Activated T-helper 1 cell treated with anti-CD3 and anti-CD28 coated beads, Interleukin-12 subunit alpha, Interleukin-12 subunit beta, Interleukin-2, Interleukin-4 antibody, amounts not matched to agents 30 ng/mL and 10 ng/mL and 1 ng/mL, durations not matched to agents 14 hours and 24 hours and 36 hours (primary cell): ENCODE measurements at regions of chr1 and their contacts with region 1.

Region 1: GRCh38 chr1:231240883-231241735 is at the start of gene GNPAT:
- DNase-seq: peak; percentile 91
- H3K4me3 Mint-ChIP-seq: peak within 1 kb of the TSS; percentile 99
- H3K27ac Mint-ChIP-seq: peak within 1 kb of the TSS; percentile 95
- H3K4me1 Mint-ChIP-seq: peaks cover 51% of the 10 kb centered on the region
- H3K27me3 Mint-ChIP-seq: no peaks in the 10 kb centered on the region
- total RNA-seq, gene GNPAT: 41.7 and 43.1 TPM in 2 replicates

Region 2: DNA sequence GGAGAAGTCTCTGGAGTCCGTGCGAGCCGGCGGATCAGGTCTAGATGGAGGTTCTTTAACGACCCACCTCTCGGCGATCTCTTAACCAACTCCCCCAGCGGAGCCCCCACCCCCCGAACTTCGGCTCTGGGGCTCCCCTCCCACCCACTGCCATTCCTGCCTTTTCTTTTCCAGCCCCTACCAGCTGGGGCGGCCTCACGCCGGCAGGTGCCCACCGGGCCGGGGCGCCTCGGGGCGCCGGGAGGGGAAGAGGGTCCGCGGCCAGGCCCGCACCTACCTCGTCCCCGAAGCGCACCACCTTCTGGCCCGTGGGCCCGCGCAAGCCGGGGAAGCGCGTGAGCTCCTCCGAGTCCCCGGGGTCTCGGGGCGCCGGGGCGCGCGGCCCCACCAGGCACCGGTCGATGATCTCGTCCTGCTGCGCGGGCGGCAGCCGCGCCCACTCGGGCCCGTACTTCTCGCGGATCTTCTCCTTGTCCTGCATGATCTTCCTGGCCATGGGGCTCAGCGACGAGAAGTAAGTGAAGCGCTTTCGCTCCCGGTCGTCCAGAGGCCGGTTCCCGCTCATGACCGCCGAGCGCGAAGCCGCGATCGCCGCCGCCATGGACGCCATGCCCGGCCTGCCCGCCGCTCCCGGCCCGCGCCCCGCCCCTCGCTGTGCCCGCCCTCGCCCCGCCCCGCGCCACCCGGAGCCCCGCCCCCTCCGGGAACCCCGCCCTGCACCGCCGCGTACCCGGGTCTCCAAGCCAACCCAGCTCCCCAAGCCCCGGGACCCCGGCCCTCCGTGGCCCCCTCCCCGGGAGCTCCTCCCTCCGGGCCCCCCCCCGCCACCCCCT is 373.0 kb before region 1 on chr1 and contains the start of gene C1orf198:
- intact Hi-C with region 1: loop called (anchors 1 kb)
- DNase-seq: peak; percentile 59
- H3K4me3 Mint-ChIP-seq: peak within 1 kb of the TSS; percentile 87
- H3K27ac Mint-ChIP-seq: peak within 1 kb of the TSS; percentile 80
- H3K4me1 Mint-ChIP-seq: peaks cover 28% of the 10 kb centered on the region
- H3K27me3 Mint-ChIP-seq: peaks cover 39% of the 10 kb centered on the region
- total RNA-seq, gene C1orf198: 14.1 and 14.6 TPM in 2 replicates

Region 3: GRCh38 chr1:231211005-231211857 is 29.9 kb before region 1 on chr1:
- intact Hi-C with region 1: loop called (anchors 1 kb)
- DNase-seq: peak; percentile 81
- H3K4me3 Mint-ChIP-seq: peak overlapping the region; percentile 82
- H3K27ac Mint-ChIP-seq: peak overlapping the region; percentile 66
- H3K4me1 Mint-ChIP-seq: peaks cover 9% of the 10 kb centered on the region
- H3K27me3 Mint-ChIP-seq: peaks cover 5% of the 10 kb centered on the region

Region 4: DNA sequence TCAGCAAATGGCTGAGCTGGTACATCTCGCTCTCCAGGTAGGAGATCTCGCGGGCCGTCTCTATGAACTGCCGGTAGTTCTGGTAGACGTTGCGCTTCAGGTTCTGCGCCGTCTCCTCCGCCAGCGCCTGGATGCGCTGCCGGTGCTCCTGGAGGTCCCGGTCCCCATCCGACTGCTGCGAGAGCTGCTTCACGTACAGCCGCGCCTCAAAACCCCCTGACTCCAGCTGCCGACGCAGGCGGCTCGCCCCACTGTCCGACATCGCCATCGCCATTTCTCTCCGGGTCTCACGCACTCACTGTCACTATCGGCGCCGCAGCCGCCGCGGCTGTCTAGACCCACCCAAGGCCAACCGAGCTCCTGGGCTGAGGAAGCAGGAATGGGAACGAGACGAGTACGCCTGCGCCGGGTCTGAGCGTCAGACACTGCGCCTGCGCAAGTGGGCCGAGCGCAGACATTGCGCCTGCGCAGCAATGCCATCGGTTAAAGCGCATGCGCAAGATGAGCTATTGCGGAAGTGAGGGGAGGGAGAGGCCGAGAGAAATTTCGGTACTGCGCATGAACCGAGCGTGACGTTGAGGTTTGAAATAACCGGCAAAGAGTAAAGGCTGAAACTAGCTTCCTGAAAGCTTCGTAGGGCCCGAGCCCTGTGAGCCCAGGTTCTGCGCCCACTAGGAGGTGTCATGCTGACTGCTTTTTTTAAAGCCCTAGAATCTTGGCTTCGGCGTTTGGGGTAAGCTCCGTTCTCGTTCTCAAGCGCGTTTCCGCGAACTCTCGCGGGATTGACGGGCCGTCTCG is 96.6 kb after region 1 on chr1 and contains the start of gene EXOC8:
- intact Hi-C with region 1: loop called (anchors 1 kb)
- DNase-seq: peak; percentile 99
- H3K4me3 Mint-ChIP-seq: peak within 1 kb of the TSS; percentile 98
- H3K27ac Mint-ChIP-seq: peak within 1 kb of the TSS; percentile 100
- H3K4me1 Mint-ChIP-seq: peaks cover 62% of the 10 kb centered on the region
- H3K27me3 Mint-ChIP-seq: peaks cover 3% of the 10 kb centered on the region
- total RNA-seq, gene EXOC8: 14.4 and 15.6 TPM in 2 replicates

Region 5: DNA sequence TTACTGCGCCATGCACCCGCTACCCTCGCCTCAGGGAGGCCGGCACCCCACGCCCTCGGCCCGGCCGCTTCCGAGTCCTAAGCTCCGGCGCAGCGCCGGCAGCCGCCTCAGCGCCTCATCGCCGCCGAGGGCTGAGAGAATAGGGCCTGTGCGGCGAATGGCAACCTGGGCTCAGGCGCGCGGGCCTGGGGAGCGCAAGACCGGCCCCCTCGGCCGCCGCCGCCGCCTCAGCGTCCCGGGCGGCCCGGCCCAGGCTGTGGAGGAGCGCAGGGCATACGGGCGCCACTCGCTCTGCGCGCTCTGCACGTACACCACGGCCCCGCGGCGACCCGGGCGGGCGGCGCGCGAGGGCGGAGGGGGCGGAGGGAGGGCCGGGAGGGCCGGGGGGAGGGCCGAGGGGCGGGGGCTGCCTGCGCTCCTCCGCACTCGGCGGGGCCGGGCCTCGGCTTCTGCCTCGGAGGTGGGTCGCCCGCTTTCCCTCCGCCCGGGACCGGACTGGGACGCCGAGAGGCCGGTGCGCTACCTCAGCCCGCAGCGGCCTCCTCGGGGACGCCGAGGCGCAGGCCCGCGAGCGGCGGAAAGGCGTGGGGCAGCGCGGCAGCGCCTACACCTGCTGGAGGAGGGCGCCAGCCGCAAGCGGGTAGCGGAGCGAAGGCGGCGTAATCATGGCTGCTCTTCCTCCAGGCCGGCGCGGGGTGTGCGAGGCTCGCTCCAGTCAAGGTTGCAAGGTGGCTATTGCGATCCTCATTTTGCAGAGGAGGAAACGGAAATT is 181.1 kb after region 1 on chr1 and contains the start of gene EGLN1:
- intact Hi-C with region 1: loop called (anchors 2 kb)
- DNase-seq: peak; percentile 78
- H3K4me3 Mint-ChIP-seq: peak within 1 kb of the TSS; percentile 93
- H3K27ac Mint-ChIP-seq: peak within 1 kb of the TSS; percentile 92
- H3K4me1 Mint-ChIP-seq: peaks cover 51% of the 10 kb centered on the region
- H3K27me3 Mint-ChIP-seq: peaks cover 18% of the 10 kb centered on the region
- total RNA-seq, gene EGLN1: 17.1 and 17.8 TPM in 2 replicates

Region 6: DNA sequence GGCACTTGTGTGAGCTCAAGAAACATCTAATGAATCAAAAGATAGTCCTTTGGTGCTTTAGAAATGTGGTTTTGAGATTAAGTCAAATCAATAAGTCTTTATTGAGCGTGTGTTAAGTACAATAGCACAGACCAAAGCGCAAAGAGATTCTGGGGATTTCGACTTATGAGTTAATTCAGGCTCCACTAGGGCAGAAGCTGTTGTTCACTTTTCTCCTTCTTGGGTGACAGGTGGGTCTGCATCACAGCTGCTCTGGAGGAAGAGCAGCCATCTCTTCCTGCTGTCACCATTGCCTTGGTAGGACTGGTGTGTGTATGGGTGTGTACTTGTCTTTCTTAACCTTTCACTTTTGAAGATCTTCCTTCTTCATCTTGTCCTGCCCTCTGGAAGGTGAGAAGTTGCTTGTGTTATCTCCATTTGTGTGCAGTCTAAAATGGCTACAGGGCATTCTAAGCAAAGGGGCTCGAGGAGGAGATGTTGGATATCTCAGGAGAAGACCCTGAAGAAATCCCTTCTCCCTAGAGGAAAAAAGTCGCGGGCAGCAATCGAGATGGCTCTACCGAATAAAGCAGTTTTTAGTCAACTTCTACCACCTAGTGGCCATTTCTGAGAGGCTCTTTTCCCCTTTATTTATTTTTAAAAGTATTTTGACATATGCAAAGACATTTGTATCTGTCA is 362.6 kb after region 1 on chr1:
- intact Hi-C with region 1: loop called (anchors 5 kb)
- DNase-seq: no peak
- H3K4me3 Mint-ChIP-seq: peak overlapping the region; percentile 86
- H3K27ac Mint-ChIP-seq: peak overlapping the region; percentile 50
- H3K4me1 Mint-ChIP-seq: peaks cover 14% of the 10 kb centered on the region
- H3K27me3 Mint-ChIP-seq: peaks cover 12% of the 10 kb centered on the region